GM12878 (cell line): ENCODE measurements at regions of chr11 and their contacts with region 1.

Region 1: GRCh38 chr11:123478352-123478987 is 48.4 kb downstream of the GRAMD1B start:
- DNase-seq: peak; percentile 60
- ATAC-seq: peak; percentile 33
- H3K4me3 ChIP-seq: peak overlapping the region; percentile 54
- H3K27ac ChIP-seq: peak overlapping the region; percentile 36; the same call in 1 of the 2 replicates
- H3K4me1 ChIP-seq: peaks cover 53% of the 10 kb centered on the region
- H3K27me3 ChIP-seq: no peaks in the 10 kb centered on the region
- CTCF ChIP-seq: peak; percentile 61 to 77 (median 68)
- EP300 ChIP-seq: no peak
- POLR2A ChIP-seq: no peak
- RAD21 ChIP-seq: peak; percentile 92

Region 2: DNA sequence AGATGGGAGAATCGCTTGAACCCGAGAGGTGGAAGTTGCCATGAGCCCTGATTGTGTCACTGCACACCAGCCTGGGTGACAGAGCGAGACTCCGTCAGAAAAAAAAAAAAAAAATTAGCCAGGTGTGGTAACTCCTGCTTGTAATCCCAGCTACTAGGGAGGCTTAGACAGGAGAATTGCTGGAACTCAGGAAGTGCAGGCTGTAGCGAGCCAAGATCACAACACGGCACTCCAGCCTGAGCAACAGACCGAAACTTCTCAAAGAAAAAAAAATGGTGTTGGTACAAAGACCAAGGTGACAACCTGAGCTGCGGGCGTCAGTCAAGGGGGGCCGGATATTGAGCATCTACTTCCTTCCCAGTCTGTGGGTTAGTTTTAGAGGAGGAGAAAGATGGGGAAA is 368.1 kb before region 1 on chr11:
- CTCF ChIA-PET with region 1: interaction called, 25 read pairs
- POLR2A ChIA-PET with region 1: no interaction called
- RAD21 ChIA-PET with region 1: interaction called, 3 read pairs
- SMC1A ChIA-PET with region 1: interaction called, 3 read pairs
- in situ Hi-C with region 1: loop called (anchors 5 kb)
- intact Hi-C with region 1: loop called (anchors 1 kb)
- DNase-seq: no peak
- ATAC-seq: no peak
- H3K4me3 ChIP-seq: no peak overlapping the region
- H3K27ac ChIP-seq: no peak overlapping the region
- H3K4me1 ChIP-seq: no peaks in the 10 kb centered on the region
- H3K27me3 ChIP-seq: peaks cover 0 to 3% of the 10 kb centered on the region in 2 experiments; a peak in 2 of 4 replicates
- CTCF ChIP-seq: no peak
- EP300 ChIP-seq: no peak
- POLR2A ChIP-seq: no peak
- RAD21 ChIP-seq: no peak

Region 3: GRCh38 chr11:123301696-123302400 is 176.6 kb before region 1 on chr11:
- CTCF ChIA-PET with region 1: interaction called, 146 read pairs
- POLR2A ChIA-PET with region 1: interaction called, 7 read pairs
- RAD21 ChIA-PET with region 1: interaction called, 62 read pairs
- SMC1A ChIA-PET with region 1: interaction called, 61 read pairs
- in situ Hi-C with region 1: loop called (anchors 5 kb)
- intact Hi-C with region 1: loop called (anchors 1 kb)
- DNase-seq: peak; percentile 32
- ATAC-seq: peak; percentile 83
- H3K4me3 ChIP-seq: peak overlapping the region; percentile 62; the same call in 1 of the 2 replicates
- H3K27ac ChIP-seq: peak overlapping the region; percentile 75
- H3K4me1 ChIP-seq: peaks cover 29% of the 10 kb centered on the region
- H3K27me3 ChIP-seq: no peaks in the 10 kb centered on the region
- CTCF ChIP-seq: peak; percentile 76 to 93 (median 84); a peak in 5 of 6 replicates
- EP300 ChIP-seq: no peak
- POLR2A ChIP-seq: no peak; the same call in 1 of the 2 replicates
- RAD21 ChIP-seq: peak; percentile 86

Region 4: GRCh38 chr11:123429913-123430720 is 48.4 kb before region 1 on chr11 and contains the start of gene GRAMD1B:
- CTCF ChIA-PET with region 1: interaction called, 11 read pairs
- POLR2A ChIA-PET with region 1: no interaction called
- RAD21 ChIA-PET with region 1: interaction called, 9 read pairs
- SMC1A ChIA-PET with region 1: interaction called, 11 read pairs
- in situ Hi-C with region 1: no loop called
- intact Hi-C with region 1: no loop called
- DNase-seq: no peak
- ATAC-seq: peak; percentile 78
- H3K4me3 ChIP-seq: peak within 1 kb of the TSS; percentile 87
- H3K27ac ChIP-seq: peak within 1 kb of the TSS; percentile 40
- H3K4me1 ChIP-seq: peaks cover 3% of the 10 kb centered on the region
- H3K27me3 ChIP-seq: no peaks in the 10 kb centered on the region
- CTCF ChIP-seq: peak; percentile 19 to 29 (median 28); a peak in 3 of 6 replicates
- EP300 ChIP-seq: no peak
- POLR2A ChIP-seq: no peak; the same call in 1 of the 2 replicates
- RAD21 ChIP-seq: no peak
- polyA plus RNA-seq, gene GRAMD1B: 1.9 to 3.5 TPM

Region 5: GRCh38 chr11:123494195-123495050 is 16.0 kb after region 1 on chr11:
- CTCF ChIA-PET with region 1: interaction called, 4 read pairs
- POLR2A ChIA-PET with region 1: no interaction called
- RAD21 ChIA-PET with region 1: interaction called, 6 read pairs
- SMC1A ChIA-PET with region 1: interaction called, 11 read pairs
- in situ Hi-C with region 1: no loop called
- intact Hi-C with region 1: no loop called
- DNase-seq: no peak
- ATAC-seq: no peak
- H3K4me3 ChIP-seq: no peak overlapping the region
- H3K27ac ChIP-seq: no peak overlapping the region
- H3K4me1 ChIP-seq: no peaks in the 10 kb centered on the region; the same call in 1 of the 2 replicates
- H3K27me3 ChIP-seq: no peaks in the 10 kb centered on the region
- CTCF ChIP-seq: no peak
- EP300 ChIP-seq: no peak
- POLR2A ChIP-seq: no peak
- RAD21 ChIP-seq: no peak

Region 6: DNA sequence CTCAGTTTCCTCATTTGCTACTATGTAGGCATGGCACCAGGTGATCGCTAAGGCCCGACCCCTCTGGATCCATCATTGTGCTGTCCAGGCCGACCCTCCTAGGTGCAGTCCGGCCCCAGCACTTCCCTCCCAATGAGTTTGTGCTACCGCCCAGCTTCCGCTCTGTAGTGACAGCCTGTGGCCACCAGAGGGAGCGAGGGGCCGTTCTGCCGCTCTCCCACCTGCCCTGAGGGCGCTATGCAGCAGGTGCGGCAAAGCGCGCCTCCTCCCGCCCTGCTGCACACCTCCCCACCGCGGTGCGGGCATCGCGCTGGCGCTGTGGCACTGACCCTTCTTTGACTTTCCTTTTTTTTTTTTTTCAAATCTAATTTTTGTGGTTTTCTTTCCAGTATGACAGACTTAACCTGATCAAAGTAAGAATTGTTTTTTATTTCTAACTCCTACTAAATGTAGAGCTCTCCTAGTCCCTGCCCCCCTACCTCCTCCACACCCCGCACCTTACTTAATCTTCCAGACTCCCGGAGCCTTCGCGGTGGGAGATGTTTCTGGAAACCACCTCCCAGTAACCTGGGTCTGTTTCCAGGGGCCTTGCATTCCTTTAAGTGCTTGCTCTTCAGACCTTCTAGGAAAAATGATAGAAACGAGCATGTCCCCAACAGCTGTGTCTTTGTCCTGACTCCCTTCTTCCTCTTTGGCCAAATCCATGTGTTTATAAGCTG is 102.2 kb after region 1 on chr11:
- CTCF ChIA-PET with region 1: interaction called, 19 read pairs
- POLR2A ChIA-PET with region 1: no interaction called
- RAD21 ChIA-PET with region 1: interaction called, 7 read pairs
- SMC1A ChIA-PET with region 1: interaction called, 12 read pairs
- in situ Hi-C with region 1: no loop called
- intact Hi-C with region 1: no loop called
- DNase-seq: no peak
- ATAC-seq: peak; percentile 93
- H3K4me3 ChIP-seq: no peak overlapping the region
- H3K27ac ChIP-seq: no peak overlapping the region
- H3K4me1 ChIP-seq: peaks cover 9% of the 10 kb centered on the region
- H3K27me3 ChIP-seq: no peaks in the 10 kb centered on the region
- CTCF ChIP-seq: peak; percentile 94 to 100 (median 96)
- EP300 ChIP-seq: no peak
- POLR2A ChIP-seq: no peak
- RAD21 ChIP-seq: peak; percentile 71

Region 7: DNA sequence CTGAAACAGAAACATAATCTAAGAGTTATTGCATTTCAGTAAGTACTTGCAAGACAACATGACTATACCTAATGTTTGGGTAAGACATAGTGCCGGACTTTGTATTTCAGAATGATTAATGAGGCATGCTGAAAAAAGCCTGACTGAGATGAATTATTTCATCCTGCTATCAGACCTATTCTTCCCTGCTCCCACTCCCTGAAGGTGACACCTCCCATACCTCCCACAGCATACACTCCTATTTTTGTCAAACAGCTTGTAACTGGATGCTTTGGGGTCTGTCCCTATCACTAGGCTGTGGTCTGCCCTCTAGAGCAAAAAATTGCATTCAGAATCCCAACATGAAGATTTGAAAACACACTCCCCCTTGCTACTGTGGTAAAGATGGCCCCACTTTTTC is 186.8 kb after region 1 on chr11:
- CTCF ChIA-PET with region 1: no interaction called
- POLR2A ChIA-PET with region 1: no interaction called
- RAD21 ChIA-PET with region 1: no interaction called
- SMC1A ChIA-PET with region 1: no interaction called
- in situ Hi-C with region 1: no loop called
- intact Hi-C with region 1: no loop called
- DNase-seq: no peak
- ATAC-seq: no peak
- H3K4me3 ChIP-seq: no peak overlapping the region
- H3K27ac ChIP-seq: no peak overlapping the region
- H3K4me1 ChIP-seq: peaks cover 2% of the 10 kb centered on the region; the same call in 1 of the 2 replicates
- H3K27me3 ChIP-seq: no peaks in the 10 kb centered on the region; a peak in 1 of 4 replicates
- CTCF ChIP-seq: no peak
- EP300 ChIP-seq: no peak
- POLR2A ChIP-seq: no peak
- RAD21 ChIP-seq: no peak